ENCODE measurements at regions of chr12 and their contacts with region 1.

Region 1: DNA sequence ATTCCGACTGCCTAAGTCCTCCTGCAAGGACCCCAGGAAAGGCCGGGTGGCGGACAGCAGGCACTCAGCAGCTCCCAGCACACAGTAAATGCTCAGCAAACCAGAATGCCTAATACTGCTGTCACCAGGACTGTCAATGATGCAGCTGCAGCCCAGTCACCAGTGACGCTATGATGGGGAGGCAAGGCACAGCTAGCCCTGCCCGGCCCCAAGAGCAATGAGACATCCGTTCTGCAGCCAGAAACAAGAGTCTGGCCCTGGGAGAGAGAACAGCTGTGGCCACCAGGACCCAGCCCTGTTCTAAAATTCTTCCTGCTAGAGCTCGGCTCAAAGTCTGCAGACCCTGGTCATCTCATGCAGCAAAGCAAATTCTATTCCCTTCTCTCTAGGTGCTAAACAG is 69.8 kb downstream of the NCOR2 start:
- DNase-seq: peak in 9 of 10 donors; percentile 52 to 88 (median 81)
- H3K4me3 ChIP-seq: no peak overlapping the region
- H3K27ac ChIP-seq: peak overlapping the region; percentile 10 to 92 (median 81)
- H3K27me3 ChIP-seq: no peaks in the 10 kb centered on the region
- CTCF ChIP-seq: peak in 3 of 56 donors; percentile 5 to 10 (median 8)

Region 2: DNA sequence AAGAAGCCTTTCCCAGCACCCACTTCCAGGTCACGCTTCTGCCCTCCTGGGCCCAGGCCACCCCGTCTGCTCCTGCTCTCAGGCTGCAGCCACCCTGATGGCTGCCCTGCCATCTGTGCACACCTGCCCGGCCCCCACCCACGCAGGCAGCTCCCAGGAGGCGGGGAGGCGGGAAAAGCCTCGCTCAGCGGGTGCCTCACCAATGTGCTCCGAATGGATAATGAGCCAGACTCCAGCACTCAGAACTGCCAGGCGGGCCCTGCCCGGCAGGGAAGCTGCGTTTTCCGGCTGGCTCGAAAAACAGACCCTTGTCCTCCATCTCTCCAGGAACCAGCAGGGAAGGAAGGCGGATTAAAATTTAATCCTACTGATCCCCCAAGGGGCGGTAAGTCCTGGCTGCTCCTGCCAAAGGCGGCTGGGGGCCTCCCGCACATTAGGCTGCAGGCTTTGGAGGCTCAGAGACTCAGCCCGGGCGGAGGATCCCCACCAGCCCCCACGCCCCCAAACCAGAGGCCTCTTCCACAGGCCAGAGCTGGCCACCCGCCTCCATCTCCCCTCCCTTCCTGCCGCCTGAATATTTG is 34.2 kb before region 1 on chr12:
- intact Hi-C with region 1: loop called in 1 of 2 experiments (anchors 5 kb)
- DNase-seq: peak in 8 of 10 donors; percentile 49 to 74 (median 64)
- H3K4me3 ChIP-seq: no peak overlapping the region
- H3K27ac ChIP-seq: peak overlapping the region in 55 of 59 donors; percentile 11 to 89 (median 63)
- H3K27me3 ChIP-seq: no peaks in the 10 kb centered on the region
- CTCF ChIP-seq: peak in 2 of 56 donors; percentile 10 to 20

Measured in dorsolateral prefrontal cortex (tissue), 120 donors.